Activated B cell treated with CpG ODN at 0.5 μM for 24 hours (primary cell): ENCODE measurements at regions of chr1 and their contacts with region 1.

Region 1: DNA sequence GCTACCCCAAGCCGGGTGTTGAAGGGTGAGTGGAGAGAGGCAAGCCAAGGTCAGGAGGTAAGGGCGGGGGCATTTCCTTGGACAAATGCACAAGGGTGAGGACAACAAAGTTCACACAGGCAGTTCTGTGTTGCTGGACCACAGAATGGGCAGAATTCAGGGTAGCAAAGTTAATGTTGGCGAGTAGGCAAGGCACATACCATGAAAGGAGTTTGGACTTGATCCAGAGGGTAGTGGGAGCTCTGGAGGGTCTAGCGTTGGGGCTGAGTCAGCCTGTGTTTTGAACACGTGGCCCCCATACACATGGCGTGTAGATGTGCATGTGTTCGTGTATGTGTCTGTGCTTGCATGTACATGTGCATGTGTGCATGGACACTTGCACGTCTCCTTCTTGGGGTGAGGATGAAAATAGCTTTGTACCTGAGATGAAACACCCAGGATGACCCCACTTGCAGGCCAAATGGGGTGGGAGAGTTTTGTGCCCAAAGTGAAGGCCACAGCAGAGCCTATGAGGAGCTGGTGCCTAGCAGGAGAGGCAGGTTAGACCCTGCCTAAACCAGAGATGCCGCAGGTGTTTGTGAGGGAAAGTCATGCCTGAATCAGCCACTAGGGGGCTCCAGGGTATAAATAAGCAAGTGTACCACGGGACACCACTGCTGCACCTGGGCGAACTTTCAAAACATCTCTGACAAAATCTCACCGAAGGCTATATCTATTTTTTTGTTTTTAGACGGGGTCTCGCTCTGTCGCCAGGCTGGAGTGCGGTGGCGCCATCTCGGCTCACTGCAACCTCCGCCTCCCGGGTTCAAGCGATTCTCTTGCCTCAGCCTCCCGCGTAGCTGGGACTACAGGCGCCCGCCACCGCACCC is 21.8 kb downstream of the SLC27A3 start:
- DNase-seq: peak; percentile 59
- ATAC-seq: peak; percentile 97
- H3K4me3 Mint-ChIP-seq: no peak overlapping the region
- H3K27ac Mint-ChIP-seq: peak overlapping the region; percentile 1
- H3K4me1 Mint-ChIP-seq: peaks cover 16% of the 10 kb centered on the region
- H3K27me3 Mint-ChIP-seq: no peaks in the 10 kb centered on the region
- CTCF ChIP-seq: peak; percentile 89

Region 2: GRCh38 chr1:153816283-153816889 is 19.4 kb after region 1 on chr1:
- CTCF ChIA-PET with region 1: interaction called, 10 read pairs
- POLR2A ChIA-PET with region 1: no interaction called
- intact Hi-C with region 1: no loop called
- DNase-seq: no peak
- ATAC-seq: no peak
- H3K4me3 Mint-ChIP-seq: no peak overlapping the region
- H3K27ac Mint-ChIP-seq: no peak overlapping the region
- H3K4me1 Mint-ChIP-seq: peaks cover 3% of the 10 kb centered on the region
- H3K27me3 Mint-ChIP-seq: no peaks in the 10 kb centered on the region
- CTCF ChIP-seq: no peak

Region 3: DNA sequence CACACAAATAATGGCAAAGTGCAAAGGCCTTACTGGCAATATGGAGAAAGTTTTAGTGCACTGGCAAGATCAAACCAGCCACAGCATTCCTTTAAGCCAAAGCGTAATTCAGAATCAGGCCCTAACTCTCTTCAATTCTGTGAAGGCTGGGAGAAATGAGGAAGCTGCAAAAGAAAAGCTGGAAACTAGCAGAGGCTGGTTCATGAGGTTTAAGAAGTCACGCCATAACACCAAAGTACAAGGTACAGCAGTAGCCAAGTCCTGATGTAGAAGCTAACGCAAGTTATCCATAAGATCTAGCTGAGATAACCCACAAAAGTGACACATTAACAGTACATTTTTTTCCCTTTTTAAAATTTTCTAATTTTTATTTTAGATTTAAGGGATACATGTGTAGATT is 35.3 kb after region 1 on chr1:
- CTCF ChIA-PET with region 1: no interaction called
- POLR2A ChIA-PET with region 1: no interaction called
- intact Hi-C with region 1: no loop called
- DNase-seq: no peak
- ATAC-seq: no peak
- H3K4me3 Mint-ChIP-seq: no peak overlapping the region
- H3K27ac Mint-ChIP-seq: no peak overlapping the region
- H3K4me1 Mint-ChIP-seq: peaks cover 8% of the 10 kb centered on the region
- H3K27me3 Mint-ChIP-seq: no peaks in the 10 kb centered on the region
- CTCF ChIP-seq: no peak

Region 4: DNA sequence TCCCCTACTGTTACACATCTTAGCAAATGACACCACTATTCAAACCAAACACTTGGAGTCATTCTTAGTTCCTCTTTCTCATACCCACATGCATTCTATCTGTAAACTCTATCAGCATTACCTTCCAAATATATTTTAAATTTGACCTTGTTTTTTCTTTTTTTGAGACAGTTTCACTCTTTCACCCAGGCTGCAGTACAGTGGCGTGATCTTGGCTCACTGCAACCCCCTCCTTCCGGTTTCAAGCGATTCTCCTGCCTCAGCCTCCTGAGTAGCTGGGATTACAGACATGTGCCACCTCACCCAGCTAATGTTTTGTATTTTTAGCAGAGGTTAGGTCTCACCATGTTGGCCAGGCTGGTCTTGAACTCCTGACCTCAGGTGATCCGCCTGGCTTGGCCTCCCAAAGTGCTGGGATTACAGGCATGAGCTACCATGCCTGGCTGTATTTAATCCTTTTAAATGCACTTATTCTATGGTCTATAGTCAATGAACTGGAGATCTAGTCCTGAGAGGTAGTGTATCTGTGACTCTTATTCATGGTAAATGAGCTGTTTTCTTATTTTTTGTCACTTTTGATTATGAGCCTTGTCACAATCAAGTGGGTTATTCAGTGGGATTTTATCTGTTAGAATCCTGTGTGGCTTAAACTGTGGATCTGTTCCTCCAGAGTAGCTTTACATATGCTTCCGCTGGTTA is 52.6 kb after region 1 on chr1:
- CTCF ChIA-PET with region 1: no interaction called
- POLR2A ChIA-PET with region 1: interaction called, 3 read pairs
- intact Hi-C with region 1: loop called (anchors 2 kb)
- DNase-seq: no peak
- ATAC-seq: peak; percentile 83
- H3K4me3 Mint-ChIP-seq: peak overlapping the region; percentile 39
- H3K27ac Mint-ChIP-seq: peak overlapping the region; percentile 63
- H3K4me1 Mint-ChIP-seq: peaks cover 62% of the 10 kb centered on the region
- H3K27me3 Mint-ChIP-seq: no peaks in the 10 kb centered on the region
- CTCF ChIP-seq: no peak

Region 5: GRCh38 chr1:154157520-154158306 is 360.7 kb after region 1 on chr1:
- CTCF ChIA-PET with region 1: no interaction called
- POLR2A ChIA-PET with region 1: no interaction called
- intact Hi-C with region 1: loop called (anchors 1 kb)
- DNase-seq: no peak
- ATAC-seq: peak; percentile 61
- H3K4me3 Mint-ChIP-seq: peak overlapping the region; percentile 39
- H3K27ac Mint-ChIP-seq: peak overlapping the region; percentile 84
- H3K4me1 Mint-ChIP-seq: peaks cover 27% of the 10 kb centered on the region
- H3K27me3 Mint-ChIP-seq: no peaks in the 10 kb centered on the region
- CTCF ChIP-seq: no peak

Region 6: GRCh38 chr1:154183045-154183915 is 386.3 kb after region 1 on chr1:
- CTCF ChIA-PET with region 1: no interaction called
- POLR2A ChIA-PET with region 1: no interaction called
- intact Hi-C with region 1: loop called (anchors 10 kb)
- DNase-seq: peak; percentile 93
- ATAC-seq: peak; percentile 76
- H3K4me3 Mint-ChIP-seq: peak overlapping the region; percentile 100
- H3K27ac Mint-ChIP-seq: peak overlapping the region; percentile 100
- H3K4me1 Mint-ChIP-seq: peaks cover 48% of the 10 kb centered on the region
- H3K27me3 Mint-ChIP-seq: peaks cover 2% of the 10 kb centered on the region
- CTCF ChIP-seq: no peak